AG04449 (cell line): ENCODE measurements at regions of chr3 and their contacts with region 1.

Region 1: GRCh38 chr3:86969500-86970189 is 21.3 kb downstream of the VGLL3 start:
- DNase-seq: no peak
- H3K4me3 ChIP-seq: no peak overlapping the region
- CTCF ChIP-seq: peak; percentile 58

Region 2: GRCh38 chr3:87082796-87083440 is 113.3 kb after region 1 on chr3:
- CTCF ChIA-PET with region 1: interaction called, 18 read pairs
- POLR2A ChIA-PET with region 1: no interaction called
- DNase-seq: no peak
- H3K4me3 ChIP-seq: no peak overlapping the region
- CTCF ChIP-seq: peak; percentile 61